Activated CD4-positive, alpha-beta T cell treated with anti-CD3 and anti-CD28 coated beads, Interleukin-2, amount 10 ng/mL, durations not matched to agents 24 days and 14 days (primary cell): ENCODE measurements at regions of chr2 and their contacts with region 1.

Region 1: DNA sequence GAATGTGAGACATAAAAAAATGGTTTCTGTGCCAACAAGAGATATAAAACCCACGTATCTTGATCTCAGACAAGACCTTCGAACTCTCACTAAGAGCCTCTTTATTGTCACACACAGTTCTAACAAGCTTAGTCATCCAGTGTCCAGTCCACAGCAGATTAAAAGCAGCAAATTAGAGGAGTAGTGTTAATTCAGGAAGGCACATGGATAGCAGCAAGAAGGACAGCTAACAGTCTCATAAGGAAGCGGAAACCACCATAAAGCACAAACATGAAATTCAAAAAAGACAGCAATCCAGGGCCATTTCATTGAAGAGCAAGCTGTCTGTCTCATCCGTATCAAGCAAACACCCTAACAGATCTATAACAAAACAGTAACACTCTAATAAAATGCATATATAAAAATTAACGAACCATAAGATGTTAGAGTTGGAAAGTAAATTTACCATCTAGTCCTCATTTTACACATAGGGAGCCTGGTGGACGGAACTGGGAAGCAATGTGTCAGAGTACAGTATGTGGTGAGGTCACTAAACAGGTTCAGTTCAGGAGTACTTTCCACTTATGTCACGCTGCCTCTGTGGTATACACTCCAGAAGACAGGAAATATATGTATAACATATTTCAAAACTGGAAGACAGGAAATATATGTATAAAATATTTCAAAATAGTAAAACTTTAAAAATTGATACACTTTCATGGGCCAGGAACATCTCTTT is 18.3 kb downstream of the AAK1 start:
- DNase-seq: no peak
- H3K4me3 Mint-ChIP-seq: no peak overlapping the region
- H3K27ac Mint-ChIP-seq: no peak overlapping the region
- H3K4me1 Mint-ChIP-seq: peaks cover 10% of the 10 kb centered on the region
- H3K27me3 Mint-ChIP-seq: no peaks in the 10 kb centered on the region

Region 2: GRCh38 chr2:69565431-69565839 is 59.8 kb before region 1 on chr2:
- intact Hi-C with region 1: loop called (anchors 5 kb)
- DNase-seq: peak; percentile 92
- H3K4me3 Mint-ChIP-seq: no peak overlapping the region
- H3K27ac Mint-ChIP-seq: no peak overlapping the region
- H3K4me1 Mint-ChIP-seq: peaks cover 58% of the 10 kb centered on the region
- H3K27me3 Mint-ChIP-seq: no peaks in the 10 kb centered on the region

Region 3: GRCh38 chr2:69581774-69582581 is 43.3 kb before region 1 on chr2:
- intact Hi-C with region 1: loop called (anchors 5 kb)
- DNase-seq: peak; percentile 61
- H3K4me3 Mint-ChIP-seq: peak overlapping the region; percentile 42
- H3K27ac Mint-ChIP-seq: peak overlapping the region; percentile 42
- H3K4me1 Mint-ChIP-seq: peaks cover 66% of the 10 kb centered on the region
- H3K27me3 Mint-ChIP-seq: no peaks in the 10 kb centered on the region

Region 4: GRCh38 chr2:69635432-69635831 is 10.2 kb after region 1 on chr2:
- intact Hi-C with region 1: no loop called
- DNase-seq: no peak
- H3K4me3 Mint-ChIP-seq: no peak overlapping the region
- H3K27ac Mint-ChIP-seq: no peak overlapping the region
- H3K4me1 Mint-ChIP-seq: peaks cover 58% of the 10 kb centered on the region
- H3K27me3 Mint-ChIP-seq: no peaks in the 10 kb centered on the region